OCI-LY7 (cell line): ENCODE measurements at regions of chr10 and their contacts with region 1.

Region 1: GRCh38 chr10:114470956-114471905 is 66.9 kb upstream of the AFAP1L2 start:
- DNase-seq: peak; percentile 87
- H3K4me3 ChIP-seq: no peak overlapping the region
- H3K27ac ChIP-seq: peak overlapping the region; percentile 39
- H3K4me1 ChIP-seq: peaks cover 27% of the 10 kb centered on the region
- CTCF ChIP-seq: peak; percentile 92

Region 2: DNA sequence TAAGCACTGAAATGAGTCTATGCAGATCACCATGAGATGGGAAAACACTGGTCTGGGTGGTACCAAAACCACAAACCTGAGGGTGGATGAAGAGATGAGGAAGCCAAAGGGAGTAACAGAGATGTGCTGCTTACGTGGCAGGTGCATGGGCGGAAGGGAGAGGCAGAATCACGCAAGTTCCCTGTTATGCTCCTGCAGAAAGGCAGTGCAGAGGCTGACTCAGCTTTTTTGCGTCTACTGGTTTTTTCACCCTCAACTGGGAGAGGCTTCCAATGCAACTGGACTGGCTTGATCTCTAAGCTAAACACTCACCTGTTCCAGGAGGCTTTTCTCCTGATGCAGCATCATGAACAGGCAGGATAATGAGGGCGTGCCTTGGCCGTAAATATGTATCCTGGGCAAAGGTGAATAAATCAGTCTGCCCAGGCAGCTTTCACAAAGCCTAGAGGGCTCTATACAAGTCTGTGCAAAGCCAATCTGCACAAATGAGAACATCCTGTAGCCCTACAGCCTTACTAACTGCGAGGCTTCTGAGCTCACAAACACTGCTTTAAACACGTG is 28.5 kb after region 1 on chr10:
- CTCF ChIA-PET with region 1: interaction called, 3 read pairs
- POLR2A ChIA-PET with region 1: interaction called, 6 read pairs
- intact Hi-C with region 1: loop called (anchors 1 kb)
- DNase-seq: peak; percentile 75
- H3K4me3 ChIP-seq: peak overlapping the region; percentile 49
- H3K27ac ChIP-seq: peak overlapping the region; percentile 97
- H3K4me1 ChIP-seq: peaks cover 92% of the 10 kb centered on the region
- CTCF ChIP-seq: no peak

Region 3: GRCh38 chr10:114541081-114541796 is 70.0 kb after region 1 on chr10:
- CTCF ChIA-PET with region 1: interaction called, 5 read pairs
- POLR2A ChIA-PET with region 1: interaction called, 24 read pairs
- intact Hi-C with region 1: loop called (anchors 1 kb)
- DNase-seq: peak; percentile 24
- H3K4me3 ChIP-seq: no peak overlapping the region
- H3K27ac ChIP-seq: peak overlapping the region; percentile 34
- H3K4me1 ChIP-seq: peaks cover 89% of the 10 kb centered on the region
- CTCF ChIP-seq: no peak

Region 4: GRCh38 chr10:114665406-114665805 is 194.2 kb after region 1 on chr10:
- CTCF ChIA-PET with region 1: no interaction called
- POLR2A ChIA-PET with region 1: no interaction called
- intact Hi-C with region 1: no loop called
- DNase-seq: no peak
- H3K4me3 ChIP-seq: no peak overlapping the region
- H3K27ac ChIP-seq: no peak overlapping the region
- H3K4me1 ChIP-seq: no peaks in the 10 kb centered on the region
- CTCF ChIP-seq: no peak

Region 5: GRCh38 chr10:114703377-114704107 is 232.3 kb after region 1 on chr10:
- CTCF ChIA-PET with region 1: no interaction called
- POLR2A ChIA-PET with region 1: no interaction called
- intact Hi-C with region 1: loop called (anchors 2 kb)
- DNase-seq: peak; percentile 48
- H3K4me3 ChIP-seq: no peak overlapping the region
- H3K27ac ChIP-seq: no peak overlapping the region
- H3K4me1 ChIP-seq: no peaks in the 10 kb centered on the region
- CTCF ChIP-seq: peak; percentile 91